ENCODE measurements at regions of chr17 and their contacts with region 1.

Region 1: DNA sequence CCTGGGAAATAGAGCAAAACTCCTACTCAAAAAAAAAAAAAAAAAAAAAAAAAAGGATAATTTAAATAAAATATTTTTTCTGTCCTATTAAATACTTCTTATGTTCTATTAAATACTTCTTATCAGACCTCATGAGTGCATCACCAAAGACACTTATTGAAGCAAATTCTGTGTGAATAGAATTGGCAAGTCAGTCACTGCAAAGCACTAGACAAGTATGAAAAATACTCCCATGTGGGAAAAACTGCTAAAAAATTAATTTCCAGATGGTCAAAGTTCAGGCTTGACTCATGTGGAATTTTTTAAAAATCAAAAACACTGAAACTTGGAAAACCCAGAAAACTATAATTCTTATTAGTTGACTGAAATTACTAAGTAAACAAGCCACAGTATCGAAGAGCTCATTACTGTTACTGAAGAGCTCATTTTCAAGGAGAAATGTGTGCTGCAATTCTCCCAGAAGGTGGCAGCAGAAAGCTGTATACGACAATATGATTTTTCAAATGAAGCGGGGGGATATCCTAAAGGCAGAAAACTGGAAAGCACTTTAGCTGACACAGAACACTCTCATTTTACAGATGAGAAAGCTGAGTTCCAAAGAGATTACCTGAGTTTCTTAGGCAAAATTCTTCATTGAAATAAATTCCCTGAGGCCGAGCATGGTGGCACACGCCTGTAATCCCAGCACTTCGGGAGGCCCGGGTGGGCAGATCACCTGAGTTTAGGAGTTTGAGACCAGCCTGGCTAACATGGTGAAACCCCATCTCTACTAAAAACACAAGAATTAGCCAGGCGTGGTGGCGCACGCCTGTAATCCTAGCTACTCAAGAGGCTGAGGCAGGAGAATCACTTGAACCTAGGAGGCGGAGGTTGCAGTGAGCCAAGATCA is 15.9 kb upstream of the FBXO47 start:
- DNase-seq: peak; percentile 13 to 55
- H3K4me3 ChIP-seq: no peak overlapping the region
- H3K27ac ChIP-seq: no peak overlapping the region
- H3K4me1 ChIP-seq: no peaks in the 10 kb centered on the region
- H3K27me3 ChIP-seq: no peaks in the 10 kb centered on the region
- CTCF ChIP-seq: peak in 2 of 3 experiments; percentile 79; a peak in 3 of 4 replicates
- EP300 ChIP-seq: no peak
- POLR2A ChIP-seq: no peak
- RAD21 ChIP-seq: peak; percentile 90 to 91

Region 2: GRCh38 chr17:38994026-38994425 is 10.9 kb after region 1 on chr17:
- CTCF ChIA-PET with region 1: interaction called, 22 read pairs
- POLR2A ChIA-PET with region 1: no interaction called
- DNase-seq: no peak
- H3K4me3 ChIP-seq: no peak overlapping the region
- H3K27ac ChIP-seq: no peak overlapping the region
- H3K4me1 ChIP-seq: no peaks in the 10 kb centered on the region
- H3K27me3 ChIP-seq: no peaks in the 10 kb centered on the region
- CTCF ChIP-seq: no peak
- EP300 ChIP-seq: no peak
- POLR2A ChIP-seq: no peak
- RAD21 ChIP-seq: no peak

Region 3: DNA sequence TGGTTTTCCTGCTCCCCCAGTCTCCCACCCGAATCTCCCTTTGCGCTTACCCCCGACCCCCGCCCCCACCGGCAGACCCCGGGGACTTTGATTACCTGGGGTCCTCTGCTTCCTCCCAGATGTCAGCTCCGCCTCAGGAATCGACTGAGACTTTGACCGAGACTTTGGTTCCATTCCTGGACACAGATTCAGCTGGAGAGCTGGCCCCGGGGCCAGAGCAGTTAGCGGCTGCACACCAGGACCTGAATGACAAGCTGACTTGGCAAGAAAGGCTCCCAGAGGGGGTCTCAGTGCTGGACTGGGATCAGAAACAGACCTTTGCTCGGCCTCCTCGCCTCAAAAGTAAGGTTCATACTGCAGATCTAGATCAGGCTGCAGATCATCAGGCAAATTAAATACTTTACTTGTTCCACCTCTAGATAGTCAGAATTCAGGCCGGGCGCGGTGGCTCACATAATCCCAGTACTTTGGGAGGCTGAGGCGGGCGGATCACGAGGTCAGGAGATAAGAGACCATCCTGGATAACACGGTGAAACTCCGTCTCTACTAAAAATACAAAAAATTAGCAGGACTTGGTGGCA is 44.4 kb after region 1 on chr17:
- CTCF ChIA-PET with region 1: interaction called, 10 read pairs
- POLR2A ChIA-PET with region 1: no interaction called
- DNase-seq: no peak
- H3K4me3 ChIP-seq: peak overlapping the region; percentile 16 to 60 (median 38); a peak in 6 of 8 replicates
- H3K27ac ChIP-seq: no peak overlapping the region
- H3K4me1 ChIP-seq: no peaks in the 10 kb centered on the region; a peak in 1 of 7 replicates
- H3K27me3 ChIP-seq: peaks cover 0 to 4% (median 2%) of the 10 kb centered on the region in 4 experiments; a peak in 5 of 7 replicates
- CTCF ChIP-seq: no peak
- EP300 ChIP-seq: no peak
- POLR2A ChIP-seq: no peak
- RAD21 ChIP-seq: no peak

Region 4: DNA sequence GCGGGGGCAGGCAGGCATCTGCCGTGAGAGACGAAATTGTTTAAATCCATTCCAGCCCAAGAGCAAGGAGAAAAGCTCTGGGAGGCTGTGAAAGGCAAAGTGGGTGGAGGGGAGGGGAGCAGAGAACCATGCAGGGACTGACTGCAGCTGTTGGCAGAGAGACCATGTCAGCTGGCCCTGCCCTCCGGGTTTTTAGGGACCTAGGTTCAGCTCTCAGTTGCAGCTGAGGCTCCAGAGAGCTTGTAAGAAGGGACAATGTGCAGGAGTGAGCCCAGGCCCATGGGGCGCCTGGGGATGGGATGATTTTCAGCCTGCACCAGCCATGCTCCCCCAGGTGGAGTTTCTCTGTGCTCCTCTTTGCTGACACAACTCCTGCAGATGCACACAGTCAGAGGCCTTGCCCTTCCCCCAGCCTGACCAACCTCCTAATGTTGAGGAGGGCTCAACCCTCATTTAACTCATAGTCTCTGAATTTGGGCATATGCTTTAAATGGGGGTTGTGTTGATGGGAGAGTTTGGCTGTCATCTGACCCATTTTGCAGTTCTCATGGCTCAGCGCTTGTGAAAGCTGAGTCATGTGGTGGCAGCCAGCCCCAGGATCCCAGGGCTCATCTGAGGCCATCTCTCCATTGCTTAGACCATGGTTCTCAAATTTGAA is 97.4 kb after region 1 on chr17:
- CTCF ChIA-PET with region 1: interaction called, 25 read pairs
- POLR2A ChIA-PET with region 1: no interaction called
- DNase-seq: no peak
- H3K4me3 ChIP-seq: peak overlapping the region in 2 of 4 experiments; percentile 7 to 9; a peak in 3 of 8 replicates
- H3K27ac ChIP-seq: no peak overlapping the region
- H3K4me1 ChIP-seq: peaks cover 4 to 16% (median 7%) of the 10 kb centered on the region in 4 experiments
- H3K27me3 ChIP-seq: no peaks in the 10 kb centered on the region
- CTCF ChIP-seq: no peak
- EP300 ChIP-seq: no peak
- POLR2A ChIP-seq: no peak
- RAD21 ChIP-seq: no peak

Region 5: DNA sequence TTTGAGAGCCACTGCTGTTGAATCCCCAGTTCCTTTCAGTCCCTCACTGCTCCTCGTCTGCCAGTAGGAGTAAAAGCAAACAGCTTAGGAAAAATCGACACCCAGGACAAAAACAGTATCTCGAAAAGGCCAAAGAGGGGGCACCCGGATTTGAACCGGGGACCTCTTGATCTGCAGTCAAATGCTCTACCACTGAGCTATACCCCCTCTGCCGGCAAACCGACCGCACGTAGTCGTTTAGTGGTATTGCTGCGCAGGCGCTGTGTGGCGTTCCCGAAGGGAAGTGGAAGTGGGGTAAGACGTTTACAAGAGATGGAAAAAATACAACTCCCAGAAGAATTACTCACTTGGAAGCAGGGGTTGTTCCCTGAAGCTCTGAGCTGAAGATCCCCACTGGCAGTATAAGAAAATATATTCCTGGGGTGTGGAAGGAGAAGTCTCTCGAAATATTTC is 170.5 kb after region 1 on chr17:
- CTCF ChIA-PET with region 1: interaction called, 163 read pairs
- POLR2A ChIA-PET with region 1: interaction called, 13 read pairs
- DNase-seq: peak in 1 of 2 experiments; percentile 98
- H3K4me3 ChIP-seq: peak overlapping the region; percentile 72 to 100 (median 87)
- H3K27ac ChIP-seq: peak overlapping the region; percentile 62; the same call in 1 of the 2 replicates
- H3K4me1 ChIP-seq: peaks cover 0 to 15% (median 6%) of the 10 kb centered on the region in 4 experiments; a peak in 4 of 7 replicates
- H3K27me3 ChIP-seq: peaks cover 3 to 18% (median 15%) of the 10 kb centered on the region in 4 experiments
- CTCF ChIP-seq: peak in 1 of 3 experiments; percentile 12; a peak in 2 of 4 replicates
- EP300 ChIP-seq: no peak
- POLR2A ChIP-seq: no peak
- RAD21 ChIP-seq: no peak; a peak in 1 of 4 replicates